BJ (cell line): ENCODE measurements at regions of chr12 and their contacts with region 1.

Region 1: GRCh38 chr12:7892186-7892980 is 19.7 kb upstream of the SLC2A14 start:
- DNase-seq: no peak
- H3K4me3 ChIP-seq: no peak overlapping the region
- H3K27me3 ChIP-seq: no peaks in the 10 kb centered on the region
- CTCF ChIP-seq: no peak

Region 2: DNA sequence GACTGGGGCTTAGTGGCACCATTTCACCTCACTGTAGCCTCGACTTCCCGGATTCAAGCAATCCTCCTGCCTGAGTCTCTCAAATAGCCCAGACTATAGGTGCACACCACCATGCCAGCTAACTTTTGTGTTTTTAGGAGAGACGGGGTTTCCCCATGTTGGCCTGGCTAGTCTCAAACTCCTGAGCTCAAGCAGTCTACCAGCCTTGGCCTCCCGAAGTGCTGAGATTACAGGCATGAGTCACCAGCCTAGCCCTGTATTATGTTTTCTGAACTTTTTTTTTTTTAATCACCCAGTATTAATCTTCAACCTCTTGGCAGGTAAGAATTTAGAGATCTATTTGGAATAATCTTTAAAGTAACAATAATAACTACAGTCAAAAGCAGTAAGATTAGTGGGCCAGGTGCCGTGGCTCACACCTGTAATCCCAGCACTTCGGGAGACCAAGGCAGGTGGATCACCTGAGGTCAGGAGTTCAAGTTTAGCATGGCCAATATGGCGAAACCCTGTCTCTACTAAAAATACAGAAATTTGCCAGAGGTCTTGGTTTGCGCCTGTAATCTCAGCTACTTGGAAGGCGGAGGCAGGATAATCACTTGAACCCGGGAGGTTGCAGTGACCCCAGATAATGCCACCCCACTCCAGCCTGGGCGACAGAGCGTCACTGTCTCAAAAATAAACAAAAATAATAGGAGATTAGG is 94.5 kb before region 1 on chr12:
- CTCF ChIA-PET with region 1: no interaction called
- POLR2A ChIA-PET with region 1: no interaction called
- DNase-seq: no peak
- H3K4me3 ChIP-seq: no peak overlapping the region
- H3K27me3 ChIP-seq: no peaks in the 10 kb centered on the region
- CTCF ChIP-seq: no peak

Region 3: GRCh38 chr12:7905071-7905470 is 12.7 kb after region 1 on chr12:
- CTCF ChIA-PET with region 1: no interaction called
- POLR2A ChIA-PET with region 1: interaction called, 11 read pairs
- DNase-seq: no peak
- H3K4me3 ChIP-seq: no peak overlapping the region
- H3K27me3 ChIP-seq: no peaks in the 10 kb centered on the region
- CTCF ChIP-seq: no peak